ENCODE measurements at regions of chr1 and their contacts with region 1.

Region 1: GRCh38 chr1:101282314-101283038 is 45.7 kb downstream of the S1PR1 start:
- DNase-seq: no peak
- ATAC-seq: no peak
- H3K4me3 Mint-ChIP-seq: no peak overlapping the region
- H3K27ac Mint-ChIP-seq: peak overlapping the region; percentile 10
- H3K4me1 Mint-ChIP-seq: peaks cover 90% of the 10 kb centered on the region
- H3K27me3 Mint-ChIP-seq: no peaks in the 10 kb centered on the region
- CTCF ChIP-seq: no peak

Region 2: GRCh38 chr1:101219924-101220695 is 62.4 kb before region 1 on chr1:
- CTCF ChIA-PET with region 1: no interaction called
- POLR2A ChIA-PET with region 1: no interaction called
- intact Hi-C with region 1: no loop called
- DNase-seq: no peak
- ATAC-seq: no peak
- H3K4me3 Mint-ChIP-seq: no peak overlapping the region
- H3K27ac Mint-ChIP-seq: no peak overlapping the region
- H3K4me1 Mint-ChIP-seq: peaks cover 31% of the 10 kb centered on the region
- H3K27me3 Mint-ChIP-seq: no peaks in the 10 kb centered on the region
- CTCF ChIP-seq: no peak

Region 3: DNA sequence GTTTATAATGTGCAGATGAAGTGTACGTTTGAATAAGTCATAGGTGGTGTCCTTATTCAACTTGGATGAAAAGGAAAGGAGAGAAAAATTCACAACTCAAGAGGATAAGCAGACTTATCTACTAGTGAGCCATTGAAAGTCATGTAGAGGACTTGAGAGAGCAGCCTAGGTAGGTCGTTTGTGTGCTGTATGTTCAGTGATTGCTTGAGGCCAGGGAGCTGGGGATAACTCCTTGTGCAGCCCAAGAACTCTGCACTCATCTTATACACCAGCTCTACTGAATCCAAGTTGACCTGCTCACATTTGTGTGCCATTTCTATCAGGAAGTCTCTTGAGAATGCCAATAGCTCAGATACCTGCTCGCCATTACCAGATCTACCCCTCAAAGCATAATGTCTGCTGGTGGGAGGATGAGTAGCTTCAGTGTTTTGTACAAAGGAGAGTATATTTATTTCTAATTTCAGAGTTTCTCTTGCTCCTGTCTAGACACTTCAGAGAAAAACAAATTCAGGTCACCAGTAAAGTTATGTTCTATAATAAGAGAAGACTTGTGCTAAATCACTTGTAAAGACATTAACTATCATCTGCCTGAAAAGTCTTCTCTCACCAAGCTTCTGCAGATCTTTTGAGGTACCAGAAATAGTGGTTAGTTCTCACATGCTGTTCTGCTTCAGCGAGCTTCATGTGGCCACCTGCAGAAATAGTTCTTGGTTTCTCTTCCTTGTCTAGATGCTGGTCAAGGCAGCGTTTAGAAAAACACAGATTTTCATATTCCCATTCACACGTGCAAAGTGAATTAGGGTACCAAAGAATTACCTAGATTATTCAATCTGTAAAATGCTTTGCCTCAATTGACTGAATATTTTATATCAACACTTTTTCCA is 34.8 kb before region 1 on chr1:
- CTCF ChIA-PET with region 1: interaction called, 301 read pairs
- POLR2A ChIA-PET with region 1: interaction called, 19 read pairs
- intact Hi-C with region 1: no loop called
- DNase-seq: no peak
- ATAC-seq: no peak
- H3K4me3 Mint-ChIP-seq: peak overlapping the region; percentile 1
- H3K27ac Mint-ChIP-seq: peak overlapping the region; percentile 44
- H3K4me1 Mint-ChIP-seq: peaks cover 64% of the 10 kb centered on the region
- H3K27me3 Mint-ChIP-seq: no peaks in the 10 kb centered on the region
- CTCF ChIP-seq: no peak

Region 4: GRCh38 chr1:101262630-101263348 is 19.7 kb before region 1 on chr1:
- CTCF ChIA-PET with region 1: interaction called, 11 read pairs
- POLR2A ChIA-PET with region 1: interaction called, 7 read pairs
- intact Hi-C with region 1: no loop called
- DNase-seq: peak; percentile 30
- ATAC-seq: peak; percentile 31
- H3K4me3 Mint-ChIP-seq: peak overlapping the region; percentile 54
- H3K27ac Mint-ChIP-seq: peak overlapping the region; percentile 82
- H3K4me1 Mint-ChIP-seq: peaks cover 74% of the 10 kb centered on the region
- H3K27me3 Mint-ChIP-seq: no peaks in the 10 kb centered on the region
- CTCF ChIP-seq: no peak

Region 5: DNA sequence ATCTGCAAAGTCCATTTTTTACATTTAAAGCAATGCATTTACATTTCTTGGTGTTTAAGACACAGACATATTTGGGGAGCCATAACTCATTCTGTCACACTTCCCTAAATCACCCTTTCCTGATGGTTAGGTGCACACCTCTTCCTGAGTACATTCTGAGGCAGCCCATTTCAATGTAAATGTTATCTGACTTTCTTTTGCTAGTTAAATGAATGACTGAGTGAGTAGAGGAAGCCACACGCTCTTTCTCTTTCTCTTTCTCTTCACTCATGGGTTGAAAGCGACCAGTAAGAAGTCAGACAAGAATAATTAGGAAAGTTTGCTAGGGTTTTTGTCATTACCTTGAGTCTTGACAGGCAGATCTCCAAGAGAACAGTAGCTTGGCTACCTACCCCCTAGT is 97.5 kb after region 1 on chr1:
- CTCF ChIA-PET with region 1: no interaction called
- POLR2A ChIA-PET with region 1: no interaction called
- intact Hi-C with region 1: no loop called
- DNase-seq: no peak
- ATAC-seq: peak; percentile 47
- H3K4me3 Mint-ChIP-seq: no peak overlapping the region
- H3K27ac Mint-ChIP-seq: no peak overlapping the region
- H3K4me1 Mint-ChIP-seq: peaks cover 13% of the 10 kb centered on the region
- H3K27me3 Mint-ChIP-seq: peaks cover 2% of the 10 kb centered on the region
- CTCF ChIP-seq: no peak